PC-3 (cell line): ENCODE measurements at regions of chr7 and their contacts with region 1.

Region 1: GRCh38 chr7:140673063-140673773 is 473 bp downstream of the ADCK2 start:
- DNase-seq: peak; percentile 82
- ATAC-seq: peak; percentile 71
- H3K4me3 ChIP-seq: peak overlapping the region; percentile 71
- H3K27ac ChIP-seq: peak overlapping the region; percentile 33; the same call in 1 of the 2 replicates
- H3K4me1 ChIP-seq: peaks cover 25% of the 10 kb centered on the region
- H3K27me3 ChIP-seq: no peaks in the 10 kb centered on the region
- CTCF ChIP-seq: no peak; the same call in 1 of the 2 replicates

Region 2: DNA sequence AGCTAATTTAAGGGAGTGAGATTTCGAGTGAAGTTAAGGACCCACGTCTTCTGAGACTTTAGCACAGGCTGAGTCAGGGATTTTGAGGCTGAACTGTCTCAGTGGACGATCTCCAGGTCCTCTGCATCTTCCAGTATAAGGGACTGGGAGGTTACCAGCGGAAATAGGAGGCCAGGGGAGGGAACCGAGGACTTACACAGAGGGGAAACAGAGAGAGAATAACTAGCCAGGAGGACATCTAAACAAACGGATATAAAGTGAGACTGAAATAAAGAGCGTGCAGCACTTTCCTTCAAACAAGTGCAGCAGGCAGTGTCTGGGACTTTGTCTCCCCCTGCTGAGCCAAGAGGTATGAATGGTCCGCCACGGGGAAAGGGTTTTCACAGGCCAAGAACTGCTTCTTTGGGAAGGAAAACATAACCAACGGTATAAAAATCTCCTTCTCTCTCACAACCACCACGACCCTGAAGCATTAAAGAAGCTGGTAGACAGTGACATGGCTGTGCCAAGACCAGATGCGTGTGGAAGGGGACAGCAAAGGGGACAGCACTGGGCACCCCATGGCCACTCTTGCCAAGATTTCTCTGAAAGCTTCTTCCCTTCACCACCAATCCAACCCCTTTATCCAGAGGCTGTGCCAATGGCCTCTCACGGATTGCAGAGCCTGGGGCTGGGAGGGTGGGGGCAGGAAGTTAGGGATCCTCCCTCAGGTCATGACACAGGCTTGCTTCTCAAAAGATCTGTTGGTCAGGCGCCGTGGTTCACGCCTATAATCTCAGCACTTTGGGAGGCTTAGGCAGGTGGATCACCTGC is 346.9 kb before region 1 on chr7:
- CTCF ChIA-PET with region 1: no interaction called
- POLR2A ChIA-PET with region 1: no interaction called
- intact Hi-C with region 1: no loop called
- DNase-seq: peak; percentile 65
- ATAC-seq: peak; percentile 96
- H3K4me3 ChIP-seq: no peak overlapping the region
- H3K27ac ChIP-seq: no peak overlapping the region
- H3K4me1 ChIP-seq: no peaks in the 10 kb centered on the region
- H3K27me3 ChIP-seq: no peaks in the 10 kb centered on the region
- CTCF ChIP-seq: peak; percentile 86

Region 3: GRCh38 chr7:140696680-140697446 is 23.6 kb after region 1 on chr7 and contains the start of gene NDUFB2:
- CTCF ChIA-PET with region 1: no interaction called
- POLR2A ChIA-PET with region 1: interaction called, 7 read pairs
- intact Hi-C with region 1: loop called (anchors 1 kb)
- DNase-seq: peak; percentile 61
- ATAC-seq: peak; percentile 88
- H3K4me3 ChIP-seq: peak within 1 kb of the TSS; percentile 88
- H3K27ac ChIP-seq: peak within 1 kb of the TSS; percentile 57
- H3K4me1 ChIP-seq: peaks cover 17% of the 10 kb centered on the region; the same call in 1 of the 2 replicates
- H3K27me3 ChIP-seq: no peaks in the 10 kb centered on the region
- CTCF ChIP-seq: no peak
- total RNA-seq, gene NDUFB2: 296 and 325 TPM in 2 replicates